GM12878 (cell line): ENCODE measurements at regions of chr17 and their contacts with region 1.

Region 1: GRCh38 chr17:66200685-66201092 is 8.8 kb upstream of the CEP112 start:
- DNase-seq: no peak
- ATAC-seq: peak; percentile 63
- H3K4me3 ChIP-seq: no peak overlapping the region
- H3K27ac ChIP-seq: no peak overlapping the region
- H3K4me1 ChIP-seq: no peaks in the 10 kb centered on the region
- H3K27me3 ChIP-seq: no peaks in the 10 kb centered on the region
- CTCF ChIP-seq: peak; percentile 33 to 48 (median 39); a peak in 5 of 6 replicates
- EP300 ChIP-seq: no peak
- POLR2A ChIP-seq: no peak
- RAD21 ChIP-seq: peak; percentile 37; the same call in 1 of the 2 replicates

Region 2: GRCh38 chr17:66222798-66223350 is 22.2 kb after region 1 on chr17:
- CTCF ChIA-PET with region 1: no interaction called
- POLR2A ChIA-PET with region 1: no interaction called
- RAD21 ChIA-PET with region 1: no interaction called
- SMC1A ChIA-PET with region 1: no interaction called
- in situ Hi-C with region 1: no loop called
- intact Hi-C with region 1: no loop called
- DNase-seq: no peak
- ATAC-seq: no peak
- H3K4me3 ChIP-seq: no peak overlapping the region
- H3K27ac ChIP-seq: no peak overlapping the region
- H3K4me1 ChIP-seq: no peaks in the 10 kb centered on the region
- H3K27me3 ChIP-seq: 0 out of 4 replicates have a peak, but pooled peaks cover 0 to 2% of the 10 kb centered on the region in 2 experiments
- CTCF ChIP-seq: no peak
- EP300 ChIP-seq: no peak
- POLR2A ChIP-seq: no peak
- RAD21 ChIP-seq: no peak

Region 3: DNA sequence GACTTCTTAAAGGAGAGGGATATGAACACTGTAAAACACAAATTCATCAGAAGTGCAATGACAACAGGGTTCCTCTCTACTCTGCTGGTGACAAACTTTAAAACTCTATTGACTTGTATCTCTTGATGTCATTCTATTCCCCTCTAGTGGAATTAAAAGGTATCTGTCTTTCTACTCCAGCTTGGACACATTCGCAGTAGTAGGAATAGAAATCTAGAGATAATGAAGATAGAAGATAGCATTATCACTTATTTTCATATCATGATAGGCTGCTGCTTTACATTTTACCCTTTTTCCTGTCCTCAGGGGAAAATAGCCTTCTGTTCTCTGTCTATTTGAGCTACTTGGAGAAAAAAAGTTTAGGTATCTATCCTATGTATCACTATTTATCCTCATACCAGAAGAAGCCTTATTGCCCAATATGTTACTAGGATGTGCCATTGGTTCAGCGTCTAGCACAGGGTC is 424.7 kb after region 1 on chr17:
- CTCF ChIA-PET with region 1: no interaction called
- POLR2A ChIA-PET with region 1: no interaction called
- RAD21 ChIA-PET with region 1: no interaction called
- SMC1A ChIA-PET with region 1: interaction called, 3 read pairs
- in situ Hi-C with region 1: no loop called
- intact Hi-C with region 1: loop called (anchors 2 kb)
- DNase-seq: no peak
- ATAC-seq: peak; percentile 77
- H3K4me3 ChIP-seq: no peak overlapping the region
- H3K27ac ChIP-seq: no peak overlapping the region
- H3K4me1 ChIP-seq: no peaks in the 10 kb centered on the region
- H3K27me3 ChIP-seq: no peaks in the 10 kb centered on the region
- CTCF ChIP-seq: peak in 2 of 3 experiments; percentile 9 to 14; a peak in 2 of 6 replicates
- EP300 ChIP-seq: no peak
- POLR2A ChIP-seq: no peak
- RAD21 ChIP-seq: peak; percentile 41; the same call in 1 of the 2 replicates

Region 4: GRCh38 chr17:66673668-66674315 is 473.1 kb after region 1 on chr17:
- CTCF ChIA-PET with region 1: interaction called, 3 read pairs
- POLR2A ChIA-PET with region 1: no interaction called
- RAD21 ChIA-PET with region 1: interaction called, 4 read pairs
- SMC1A ChIA-PET with region 1: no interaction called
- in situ Hi-C with region 1: no loop called
- intact Hi-C with region 1: loop called (anchors 2 kb)
- DNase-seq: no peak
- ATAC-seq: peak; percentile 72
- H3K4me3 ChIP-seq: no peak overlapping the region
- H3K27ac ChIP-seq: no peak overlapping the region
- H3K4me1 ChIP-seq: no peaks in the 10 kb centered on the region
- H3K27me3 ChIP-seq: no peaks in the 10 kb centered on the region
- CTCF ChIP-seq: peak; percentile 49 to 63 (median 55); a peak in 5 of 6 replicates
- EP300 ChIP-seq: no peak
- POLR2A ChIP-seq: no peak
- RAD21 ChIP-seq: peak; percentile 74

Region 5: DNA sequence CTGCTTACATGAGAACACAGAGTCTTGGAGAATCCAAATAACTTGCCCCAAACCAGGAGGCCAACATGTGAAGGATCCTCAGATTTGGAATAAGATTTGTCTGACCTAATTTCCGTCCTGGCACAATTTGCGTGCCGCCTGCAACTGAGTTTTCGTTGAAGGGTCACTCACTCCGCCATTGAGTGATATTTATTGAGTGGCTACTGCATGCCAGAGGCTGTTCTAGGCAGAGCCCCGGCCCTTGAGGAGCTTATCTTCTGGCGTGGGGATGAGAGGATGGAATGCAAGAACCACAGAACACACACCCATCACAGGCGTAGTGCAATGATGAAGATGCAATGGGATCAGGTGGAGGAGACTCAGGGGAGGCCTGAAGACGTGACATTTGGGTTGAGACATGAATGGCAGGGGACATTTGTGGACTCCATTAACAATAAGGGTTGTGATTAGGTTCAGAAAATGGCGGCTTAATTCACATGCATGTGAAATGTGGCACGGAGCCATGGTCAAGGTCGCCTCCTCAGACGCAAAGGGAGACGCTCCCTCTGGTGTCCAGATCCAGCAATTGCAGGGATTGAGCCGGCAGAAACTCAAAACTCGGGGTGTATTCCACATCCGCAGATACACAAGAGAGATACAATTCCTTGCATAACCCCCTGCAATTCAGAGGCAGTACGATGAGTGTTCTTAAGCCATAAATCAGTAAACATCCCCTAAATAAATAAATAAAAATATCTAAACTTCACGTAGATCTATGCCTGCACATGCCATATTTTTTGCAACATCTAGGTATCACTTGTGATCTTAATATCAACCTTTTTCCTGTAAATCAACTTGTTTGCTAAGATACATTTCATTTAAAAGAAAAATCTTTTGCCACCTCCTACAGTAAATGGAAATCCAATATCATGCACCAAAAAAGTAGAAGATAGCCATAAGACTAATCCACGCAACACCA is 705.9 kb after region 1 on chr17:
- CTCF ChIA-PET with region 1: interaction called, 4 read pairs
- POLR2A ChIA-PET with region 1: no interaction called
- RAD21 ChIA-PET with region 1: no interaction called
- SMC1A ChIA-PET with region 1: no interaction called
- in situ Hi-C with region 1: no loop called
- intact Hi-C with region 1: loop called (anchors 5 kb)
- DNase-seq: peak; percentile 25
- ATAC-seq: peak; percentile 83
- H3K4me3 ChIP-seq: no peak overlapping the region
- H3K27ac ChIP-seq: no peak overlapping the region
- H3K4me1 ChIP-seq: no peaks in the 10 kb centered on the region
- H3K27me3 ChIP-seq: no peaks in the 10 kb centered on the region; a peak in 1 of 4 replicates
- CTCF ChIP-seq: peak; percentile 83 to 92 (median 87)
- EP300 ChIP-seq: no peak
- POLR2A ChIP-seq: no peak
- RAD21 ChIP-seq: peak; percentile 77